Heart left ventricle (tissue), 16 donors: ENCODE measurements at regions of chr6 and their contacts with region 1.

Region 1: DNA sequence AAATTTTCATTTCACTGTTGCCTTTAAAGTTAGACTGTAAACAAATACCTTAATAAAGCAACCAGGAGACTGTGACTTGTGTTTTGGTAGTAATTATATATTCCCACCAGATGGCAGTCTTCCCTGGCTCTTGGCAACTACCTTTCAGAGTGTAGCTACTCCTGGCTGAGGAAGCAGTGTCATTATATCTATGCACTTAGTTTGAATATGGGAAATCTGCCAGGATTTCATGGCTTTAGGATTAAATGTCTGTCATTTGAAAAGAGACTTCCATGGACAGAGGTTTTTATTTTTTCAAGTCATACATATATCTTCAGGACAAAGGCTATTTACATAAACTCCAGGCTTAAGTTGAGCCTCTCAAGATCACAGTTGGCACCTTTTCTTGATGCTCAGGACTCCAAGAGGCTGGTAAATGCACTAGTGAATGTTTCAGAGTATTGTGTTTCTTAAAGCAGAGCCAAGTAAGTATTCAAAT is 160.1 kb downstream of the C6orf58 start:
- DNase-seq: peak in 2 of 5 donors; percentile 26 to 35
- ATAC-seq: peak; percentile 64 to 76 (median 72)
- H3K4me3 ChIP-seq: no peak overlapping the region
- H3K27ac ChIP-seq: no peak overlapping the region
- H3K4me1 ChIP-seq: peaks cover 0 to 3% (median 0%) of the 10 kb centered on the region in 12 donors
- H3K27me3 ChIP-seq: peaks cover 0 to 8% (median 0%) of the 10 kb centered on the region in 9 donors
- CTCF ChIP-seq: peak; percentile 45 to 77 (median 65)
- POLR2A ChIP-seq: no peak

Region 2: DNA sequence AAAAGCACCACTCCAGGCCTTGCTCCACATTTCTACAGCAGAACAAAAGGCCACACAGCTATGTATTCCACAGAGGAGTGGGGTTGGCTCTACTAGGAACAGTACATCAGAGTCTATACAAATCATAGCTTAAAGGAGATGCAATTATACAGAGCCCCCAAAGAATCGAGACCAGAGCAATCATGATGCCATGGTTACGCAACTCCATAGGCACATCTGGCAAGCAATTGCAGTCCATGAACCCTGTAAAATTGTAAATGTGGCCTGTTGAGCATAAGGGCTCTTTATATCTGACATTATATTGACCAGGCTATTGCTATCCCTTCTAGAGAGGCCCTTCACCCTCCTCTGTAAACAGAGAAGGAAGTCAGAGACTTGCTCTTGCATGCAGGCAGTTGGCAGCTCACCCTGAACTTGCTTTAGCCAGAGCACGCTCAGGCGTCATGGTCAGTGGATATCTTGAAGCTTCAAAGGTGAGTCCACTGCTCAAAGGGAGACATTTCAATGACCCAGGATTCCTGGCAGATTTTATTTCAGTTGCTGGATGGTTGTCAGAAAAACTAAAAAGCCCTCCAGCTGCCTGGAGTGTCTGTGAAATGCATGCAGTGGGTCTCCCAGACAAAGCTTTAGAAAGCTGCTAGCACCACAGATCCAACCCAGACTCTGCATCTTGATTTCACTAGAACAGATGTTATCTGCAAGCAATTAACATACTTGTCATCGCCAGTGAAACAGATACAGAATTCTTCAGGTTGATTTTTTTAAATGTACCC is 1039.9 kb before region 1 on chr6:
- intact Hi-C with region 1: no loop called
- DNase-seq: no peak
- ATAC-seq: no peak
- H3K4me3 ChIP-seq: no peak overlapping the region
- H3K27ac ChIP-seq: no peak overlapping the region
- H3K4me1 ChIP-seq: no peaks in the 10 kb centered on the region
- H3K27me3 ChIP-seq: no peaks in the 10 kb centered on the region
- CTCF ChIP-seq: no peak
- POLR2A ChIP-seq: no peak

Region 3: DNA sequence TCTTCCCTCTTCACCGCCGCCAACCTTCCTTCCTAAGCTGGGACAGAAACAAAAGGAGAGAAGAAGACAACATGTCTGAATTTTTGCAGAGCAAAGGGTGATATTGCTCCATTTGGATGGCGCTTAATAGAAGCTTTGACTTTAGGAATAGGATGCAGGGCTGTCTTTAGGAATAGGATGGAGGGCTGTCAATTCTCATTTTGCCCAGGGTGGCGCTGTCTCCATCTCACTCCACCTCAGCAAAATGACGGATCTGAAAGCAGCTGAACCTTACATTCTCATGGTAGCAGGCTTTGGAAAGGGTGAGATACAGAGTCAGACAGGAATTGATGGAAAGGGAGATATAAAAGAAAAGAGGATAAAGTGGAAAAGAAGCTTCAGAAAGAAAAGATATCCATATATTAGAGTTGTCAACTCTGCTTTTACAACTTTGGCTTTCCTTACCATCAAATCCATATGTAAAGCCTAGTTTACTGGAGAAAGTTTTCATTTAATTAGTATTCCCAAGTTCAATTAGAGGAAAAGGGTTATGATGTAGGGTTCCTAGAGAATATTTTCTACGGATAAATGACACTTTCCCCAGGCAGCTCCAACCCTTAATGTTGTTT is 220.3 kb before region 1 on chr6:
- intact Hi-C with region 1: no loop called
- DNase-seq: peak in 1 of 5 donors; percentile 8
- ATAC-seq: peak in 3 of 4 donors; percentile 60 to 74 (median 70)
- H3K4me3 ChIP-seq: peak overlapping the region; percentile 44 to 70 (median 60)
- H3K27ac ChIP-seq: no peak overlapping the region
- H3K4me1 ChIP-seq: peaks cover 0 to 37% (median 15%) of the 10 kb centered on the region in 12 donors
- H3K27me3 ChIP-seq: peaks cover 0 to 84% (median 61%) of the 10 kb centered on the region in 9 donors
- CTCF ChIP-seq: peak; percentile 14 to 65 (median 44)
- POLR2A ChIP-seq: no peak

Region 4: DNA sequence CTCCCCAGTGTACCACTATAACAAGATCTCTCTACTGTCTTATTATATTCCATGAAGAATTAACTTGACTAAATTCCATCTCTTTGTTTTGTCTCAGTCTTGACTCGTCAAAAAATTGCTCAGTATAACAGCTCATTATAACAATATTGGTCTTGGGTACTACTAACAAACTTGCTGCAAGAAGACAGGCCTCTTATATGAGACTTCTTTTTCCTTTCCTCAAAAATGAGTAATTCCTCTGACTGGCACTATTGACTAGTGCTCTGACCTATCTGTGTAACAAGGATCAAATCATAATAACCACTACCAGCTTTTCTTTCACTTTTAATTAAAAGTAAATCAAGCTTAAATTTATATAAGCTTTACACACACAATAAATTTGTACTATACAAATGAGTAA is 255.1 kb after region 1 on chr6:
- intact Hi-C with region 1: no loop called
- DNase-seq: no peak
- ATAC-seq: no peak
- H3K4me3 ChIP-seq: no peak overlapping the region
- H3K27ac ChIP-seq: no peak overlapping the region
- H3K4me1 ChIP-seq: no peaks in the 10 kb centered on the region
- H3K27me3 ChIP-seq: no peaks in the 10 kb centered on the region
- CTCF ChIP-seq: no peak
- POLR2A ChIP-seq: no peak

Region 5: GRCh38 chr6:128327890-128328289 is 590.8 kb after region 1 on chr6:
- intact Hi-C with region 1: loop called in 1 of 10 experiments (anchors 5 kb)
- DNase-seq: no peak
- ATAC-seq: peak in 3 of 4 donors; percentile 37 to 57 (median 50)
- H3K4me3 ChIP-seq: no peak overlapping the region
- H3K27ac ChIP-seq: no peak overlapping the region
- H3K4me1 ChIP-seq: peaks cover 0 to 21% (median 7%) of the 10 kb centered on the region in 12 donors
- H3K27me3 ChIP-seq: no peaks in the 10 kb centered on the region
- CTCF ChIP-seq: peak in 10 of 12 donors; percentile 20 to 55 (median 38)
- POLR2A ChIP-seq: no peak

Region 6: GRCh38 chr6:128731249-128732165 is 994.5 kb after region 1 on chr6:
- intact Hi-C with region 1: loop called in 9 of 10 experiments (anchors 1 to 10 kb)
- DNase-seq: peak in 1 of 5 donors; percentile 19
- ATAC-seq: peak; percentile 67 to 85 (median 80)
- H3K4me3 ChIP-seq: no peak overlapping the region
- H3K27ac ChIP-seq: peak overlapping the region in 4 of 12 donors; percentile 6 to 49 (median 22)
- H3K4me1 ChIP-seq: peaks cover 0 to 10% (median 0%) of the 10 kb centered on the region in 12 donors
- H3K27me3 ChIP-seq: no peaks in the 10 kb centered on the region
- CTCF ChIP-seq: peak; percentile 44 to 75 (median 60)
- POLR2A ChIP-seq: no peak

Region 7: GRCh38 chr6:129575378-129576118 is 1838.5 kb after region 1 on chr6:
- intact Hi-C with region 1: loop called in 1 of 10 experiments (anchors 10 kb)
- DNase-seq: no peak
- ATAC-seq: peak; percentile 47 to 72 (median 70)
- H3K4me3 ChIP-seq: peak overlapping the region in 9 of 12 donors; percentile 11 to 47 (median 30)
- H3K27ac ChIP-seq: peak overlapping the region in 1 of 12 donors; percentile 23
- H3K4me1 ChIP-seq: peaks cover 0 to 8% (median 0%) of the 10 kb centered on the region in 12 donors
- H3K27me3 ChIP-seq: no peaks in the 10 kb centered on the region
- CTCF ChIP-seq: peak; percentile 56 to 82 (median 66)
- POLR2A ChIP-seq: no peak